ENCODE measurements at regions of chr5 and their contacts with region 1.

Region 1: DNA sequence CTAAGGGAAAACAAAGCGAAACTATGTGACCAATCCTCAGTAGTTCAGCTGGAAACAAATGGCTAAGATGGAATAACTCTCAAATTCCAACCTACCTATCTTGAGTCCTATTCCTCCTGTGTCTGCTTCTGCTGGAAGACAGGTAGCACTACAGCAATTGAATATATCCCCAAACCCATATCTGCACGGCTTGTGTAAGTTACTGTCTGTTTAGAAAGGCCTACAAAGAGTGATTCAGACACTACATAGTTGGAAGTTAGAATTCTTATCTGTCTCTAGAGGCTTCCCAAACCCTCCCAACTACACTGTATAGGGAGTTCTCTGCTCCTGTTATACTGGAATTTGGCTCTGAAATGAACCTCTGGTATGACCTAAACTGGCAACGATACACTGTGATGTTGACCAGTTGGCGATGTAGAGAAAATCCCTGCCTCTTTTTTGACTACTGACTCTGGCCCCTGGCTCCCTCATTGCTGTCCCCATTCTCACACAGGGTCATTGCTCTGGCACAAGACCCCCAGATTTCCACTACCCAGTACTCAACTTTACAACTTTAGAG is 22.6 kb upstream of the NADK2 start:
- DNase-seq: no peak
- H3K4me3 Mint-ChIP-seq: no peak overlapping the region
- H3K27ac Mint-ChIP-seq: no peak overlapping the region
- H3K4me1 Mint-ChIP-seq: no peaks in the 10 kb centered on the region
- H3K27me3 Mint-ChIP-seq: peaks cover 22% of the 10 kb centered on the region

Region 2: GRCh38 chr5:36305571-36306326 is 41.5 kb after region 1 on chr5:
- intact Hi-C with region 1: loop called (anchors 1 kb)
- DNase-seq: no peak
- H3K4me3 Mint-ChIP-seq: no peak overlapping the region
- H3K27ac Mint-ChIP-seq: no peak overlapping the region
- H3K4me1 Mint-ChIP-seq: no peaks in the 10 kb centered on the region
- H3K27me3 Mint-ChIP-seq: peaks cover 11% of the 10 kb centered on the region

Region 3: DNA sequence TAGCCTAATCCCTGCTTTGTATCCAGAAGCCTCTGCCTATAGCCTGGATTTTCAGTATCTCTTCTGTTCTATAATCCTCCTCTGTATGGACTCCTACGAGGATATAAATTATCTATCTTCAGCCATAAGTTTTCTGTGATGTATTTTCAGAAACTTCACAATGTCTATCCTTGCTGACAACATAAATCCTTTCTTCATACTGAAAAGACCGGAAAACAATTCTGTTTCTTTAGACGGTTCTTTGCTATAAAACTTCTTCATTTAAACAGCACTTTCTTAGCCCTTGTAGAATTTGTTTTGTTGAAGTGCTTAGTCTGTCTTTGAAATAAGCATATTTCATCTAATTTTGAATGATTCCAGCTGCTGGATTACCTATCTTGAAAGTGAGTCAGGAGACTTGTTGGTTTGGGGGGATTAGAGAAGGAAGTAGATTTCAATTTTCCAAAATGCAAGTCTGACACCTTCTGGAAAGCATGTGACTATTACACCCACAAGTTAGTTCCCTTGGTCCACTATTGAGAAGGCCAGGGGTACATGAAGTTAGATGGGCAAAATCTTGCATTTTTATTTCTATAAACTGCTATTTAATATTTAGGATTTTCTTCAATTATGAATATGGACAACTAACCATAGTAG is 133.7 kb after region 1 on chr5:
- intact Hi-C with region 1: loop called (anchors 1 kb)
- DNase-seq: no peak
- H3K4me3 Mint-ChIP-seq: no peak overlapping the region
- H3K27ac Mint-ChIP-seq: no peak overlapping the region
- H3K4me1 Mint-ChIP-seq: no peaks in the 10 kb centered on the region
- H3K27me3 Mint-ChIP-seq: peaks cover 17% of the 10 kb centered on the region

Region 4: GRCh38 chr5:36459176-36460135 is 195.2 kb after region 1 on chr5:
- intact Hi-C with region 1: loop called (anchors 1 kb)
- DNase-seq: no peak
- H3K4me3 Mint-ChIP-seq: no peak overlapping the region
- H3K27ac Mint-ChIP-seq: no peak overlapping the region
- H3K4me1 Mint-ChIP-seq: no peaks in the 10 kb centered on the region
- H3K27me3 Mint-ChIP-seq: peaks cover 3% of the 10 kb centered on the region

Region 5: DNA sequence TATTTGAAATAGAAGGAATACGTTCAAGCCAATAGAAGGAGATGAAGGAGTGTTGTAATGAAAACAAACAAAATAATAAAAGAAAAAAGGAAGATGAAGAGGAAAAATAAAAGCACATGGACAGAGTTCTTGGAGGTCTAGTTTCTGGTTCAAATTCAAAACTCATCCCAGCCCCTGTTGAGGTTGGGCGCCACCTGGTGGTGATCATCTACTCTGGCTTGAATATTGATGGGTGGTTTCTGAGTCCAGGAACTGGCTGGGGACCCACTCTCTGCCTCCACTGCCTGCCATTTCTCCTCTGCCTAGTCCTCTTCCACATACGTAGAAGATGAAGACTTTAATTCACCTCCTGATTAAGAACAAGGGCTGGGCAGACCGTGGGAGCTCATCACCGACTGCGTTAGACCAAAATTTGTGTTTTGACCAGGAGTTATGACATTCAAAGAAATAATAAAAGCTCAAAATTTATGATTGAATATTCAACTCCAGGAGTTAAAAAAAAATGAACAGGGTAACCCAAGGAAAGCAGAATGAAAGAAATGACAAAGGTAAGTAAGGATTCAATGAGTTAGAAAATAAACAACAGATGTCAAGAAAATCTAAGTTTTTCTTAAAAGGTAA is 243.2 kb after region 1 on chr5:
- intact Hi-C with region 1: loop called (anchors 1 kb)
- DNase-seq: peak; percentile 47
- H3K4me3 Mint-ChIP-seq: no peak overlapping the region
- H3K27ac Mint-ChIP-seq: no peak overlapping the region
- H3K4me1 Mint-ChIP-seq: no peaks in the 10 kb centered on the region
- H3K27me3 Mint-ChIP-seq: peaks cover 9% of the 10 kb centered on the region

Region 6: GRCh38 chr5:36690041-36690961 is 426.0 kb after region 1 on chr5:
- intact Hi-C with region 1: loop called (anchors 1 kb)
- DNase-seq: peak; percentile 38
- H3K4me3 Mint-ChIP-seq: peak overlapping the region; percentile 62
- H3K27ac Mint-ChIP-seq: no peak overlapping the region
- H3K4me1 Mint-ChIP-seq: peaks cover 11% of the 10 kb centered on the region
- H3K27me3 Mint-ChIP-seq: peaks cover 6% of the 10 kb centered on the region

Measured in activated T-helper 1 cell treated with anti-CD3 and anti-CD28 coated beads, Interleukin-12 subunit alpha, Interleukin-12 subunit beta, Interleukin-2, Interleukin-4 antibody, amounts not matched to agents 30 ng/mL and 10 ng/mL and 1 ng/mL, durations not matched to agents 14 hours and 24 hours and 36 hours (primary cell).